ENCODE measurements at regions of chr19 and their contacts with region 1.

Region 1: GRCh38 chr19:5967994-5968430 is 9.9 kb downstream of the RANBP3 start:
- DNase-seq: peak in 8 of 9 donors; percentile 37 to 63 (median 56)
- ATAC-seq: peak; percentile 82
- H3K4me3 ChIP-seq: no peak overlapping the region
- H3K4me3 Mint-ChIP-seq: peak overlapping the region; percentile 33 to 84 (median 64)
- H3K27ac ChIP-seq: peak overlapping the region; percentile 53
- H3K27ac Mint-ChIP-seq: peak overlapping the region; percentile 3 to 92 (median 84)
- H3K4me1 ChIP-seq: peaks cover 37 to 66% of the 10 kb centered on the region in 2 donors
- H3K4me1 Mint-ChIP-seq: peaks cover 56 to 97% (median 90%) of the 10 kb centered on the region in 7 donors
- H3K27me3 ChIP-seq: no peaks in the 10 kb centered on the region
- H3K27me3 Mint-ChIP-seq: no peaks in the 10 kb centered on the region

Region 2: DNA sequence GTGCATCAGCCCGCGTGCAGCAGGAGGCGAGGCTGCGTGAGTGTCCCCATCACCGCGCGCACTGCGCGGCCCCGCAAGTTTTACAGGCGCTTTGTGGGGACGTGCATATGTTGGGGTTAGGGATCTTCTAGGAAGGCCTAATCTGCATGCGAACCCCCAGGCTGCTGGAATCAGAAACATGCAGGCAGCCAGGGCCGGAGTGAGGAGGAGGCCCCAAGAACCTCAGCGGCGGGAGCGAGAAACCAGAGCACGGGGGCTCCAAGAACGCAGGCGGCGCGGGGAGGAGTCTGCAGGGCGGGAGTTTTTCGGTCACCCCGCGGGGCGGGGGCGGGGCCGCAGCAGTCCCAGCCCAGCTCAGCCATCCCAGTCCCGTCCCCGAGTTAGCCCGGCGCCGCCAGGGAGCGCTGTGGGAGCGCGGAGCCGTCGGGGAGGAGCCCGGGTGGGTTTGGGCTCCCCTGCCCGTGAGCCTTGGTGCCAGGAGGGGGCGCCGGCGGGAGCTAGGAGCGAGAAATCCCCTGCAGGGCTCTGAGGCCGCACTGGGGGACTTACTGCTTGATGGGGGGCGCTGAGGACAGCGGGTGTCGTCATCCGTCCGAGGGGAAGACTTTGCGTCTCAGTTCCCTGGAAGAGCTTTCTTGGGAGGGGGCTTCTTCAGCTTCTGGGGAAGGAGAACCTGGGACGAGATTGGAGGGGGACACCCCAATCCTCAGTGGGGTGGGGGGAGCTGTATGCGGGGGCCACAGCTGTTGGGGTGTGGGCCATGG is 164.1 kb before region 1 on chr19:
- CTCF ChIA-PET with region 1: interaction called, 4 read pairs
- POLR2A ChIA-PET with region 1: interaction called, 7 read pairs
- intact Hi-C with region 1: loop called in 1 of 2 experiments (anchors 5 kb)
- DNase-seq: peak; percentile 89 to 99 (median 93)
- ATAC-seq: peak; percentile 98
- H3K4me3 ChIP-seq: peak overlapping the region; percentile 64
- H3K4me3 Mint-ChIP-seq: peak overlapping the region; percentile 62 to 87 (median 80)
- H3K27ac ChIP-seq: peak overlapping the region; percentile 44
- H3K27ac Mint-ChIP-seq: peak overlapping the region in 8 of 9 donors; percentile 28 to 83 (median 72)
- H3K4me1 ChIP-seq: peaks cover 13 to 20% of the 10 kb centered on the region in 2 donors
- H3K4me1 Mint-ChIP-seq: peaks cover 7 to 24% (median 21%) of the 10 kb centered on the region in 7 donors
- H3K27me3 ChIP-seq: peaks cover 0 to 2% of the 10 kb centered on the region in 2 donors
- H3K27me3 Mint-ChIP-seq: peaks cover 12 to 45% (median 18%) of the 10 kb centered on the region in 5 donors

Region 3: DNA sequence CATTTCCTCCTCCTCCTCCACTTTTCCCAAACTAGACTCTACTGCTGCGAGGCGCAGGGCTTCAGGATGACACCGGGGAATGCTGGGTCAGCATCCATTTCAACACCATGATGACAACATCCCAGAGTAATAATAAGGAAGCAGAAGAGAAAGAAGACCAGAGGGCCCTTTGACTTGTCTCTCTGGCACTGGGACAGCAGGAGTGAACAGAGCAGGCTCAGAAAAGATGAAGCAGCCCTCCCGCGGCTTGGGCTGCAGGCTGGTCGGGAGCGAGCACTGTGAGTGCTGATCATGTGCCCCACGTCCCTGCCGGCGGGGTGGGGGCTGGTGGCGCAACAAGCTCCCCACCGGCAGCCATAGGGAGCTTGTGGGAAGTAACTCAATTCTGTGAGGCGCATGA is 20.6 kb before region 1 on chr19:
- CTCF ChIA-PET with region 1: interaction called, 21 read pairs
- POLR2A ChIA-PET with region 1: interaction called, 89 read pairs
- intact Hi-C with region 1: loop called in 1 of 2 experiments (anchors 2 kb)
- DNase-seq: no peak
- ATAC-seq: peak; percentile 68
- H3K4me3 ChIP-seq: no peak overlapping the region
- H3K4me3 Mint-ChIP-seq: peak overlapping the region in 9 of 10 donors; percentile 16 to 82 (median 60)
- H3K27ac ChIP-seq: no peak overlapping the region
- H3K27ac Mint-ChIP-seq: peak overlapping the region in 7 of 9 donors; percentile 64 to 99 (median 89)
- H3K4me1 ChIP-seq: peaks cover 28 to 59% of the 10 kb centered on the region in 2 donors
- H3K4me1 Mint-ChIP-seq: peaks cover 57 to 88% (median 77%) of the 10 kb centered on the region in 7 donors
- H3K27me3 ChIP-seq: no peaks in the 10 kb centered on the region
- H3K27me3 Mint-ChIP-seq: no peaks in the 10 kb centered on the region

Region 4: GRCh38 chr19:5953680-5954213 is 14.3 kb before region 1 on chr19:
- CTCF ChIA-PET with region 1: interaction called, 21 read pairs
- POLR2A ChIA-PET with region 1: interaction called, 89 read pairs
- intact Hi-C with region 1: loop called in 1 of 2 experiments (anchors 2 kb)
- DNase-seq: peak in 8 of 9 donors; percentile 16 to 37 (median 32)
- ATAC-seq: peak; percentile 45
- H3K4me3 ChIP-seq: peak overlapping the region; percentile 17
- H3K4me3 Mint-ChIP-seq: peak overlapping the region; percentile 47 to 81 (median 74)
- H3K27ac ChIP-seq: peak overlapping the region; percentile 55
- H3K27ac Mint-ChIP-seq: peak overlapping the region; percentile 45 to 97 (median 89)
- H3K4me1 ChIP-seq: peaks cover 30 to 73% of the 10 kb centered on the region in 2 donors
- H3K4me1 Mint-ChIP-seq: peaks cover 67 to 99% (median 92%) of the 10 kb centered on the region in 7 donors
- H3K27me3 ChIP-seq: no peaks in the 10 kb centered on the region
- H3K27me3 Mint-ChIP-seq: no peaks in the 10 kb centered on the region

Region 5: DNA sequence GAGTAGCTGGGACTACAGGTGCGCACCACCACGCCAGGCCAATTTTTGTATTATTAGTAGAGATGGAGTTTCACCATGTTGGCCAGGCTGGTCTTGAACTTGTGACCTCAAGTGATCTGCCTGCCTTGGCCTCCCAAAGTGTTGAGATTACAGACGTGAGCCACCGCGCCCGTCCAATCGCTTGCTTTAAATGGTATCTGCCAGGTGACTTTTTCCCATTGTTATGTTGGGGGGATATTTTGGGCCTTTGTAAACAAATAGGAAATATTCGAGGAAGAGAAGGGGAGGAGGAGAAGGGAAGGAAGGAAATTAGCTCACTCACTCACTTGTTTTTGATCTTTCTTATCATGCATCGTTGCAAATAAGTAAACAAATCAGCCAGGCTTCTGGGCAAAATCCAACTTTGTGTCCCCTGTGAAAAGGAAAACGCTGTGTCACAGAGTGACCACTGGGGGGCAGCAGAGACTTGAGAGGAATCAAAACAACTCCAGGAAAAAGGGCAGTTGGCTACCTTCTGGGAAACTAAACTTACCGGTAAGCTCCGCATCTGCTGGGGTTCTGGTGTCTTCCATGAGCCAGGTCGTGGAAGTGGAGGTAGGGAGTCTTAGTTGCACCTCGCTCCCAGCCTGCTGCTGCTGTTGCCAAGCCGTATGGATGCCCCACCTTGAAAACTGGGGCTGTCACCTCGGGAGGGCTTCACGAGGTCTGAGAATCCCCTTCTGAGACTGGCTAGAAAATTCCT is 19.2 kb after region 1 on chr19:
- CTCF ChIA-PET with region 1: interaction called, 14 read pairs
- POLR2A ChIA-PET with region 1: interaction called, 3 read pairs
- intact Hi-C with region 1: loop called in 1 of 2 experiments (anchors 1 kb)
- DNase-seq: peak; percentile 52 to 71 (median 64)
- ATAC-seq: peak; percentile 85
- H3K4me3 ChIP-seq: peak overlapping the region; percentile 69
- H3K4me3 Mint-ChIP-seq: peak overlapping the region; percentile 61 to 82 (median 76)
- H3K27ac ChIP-seq: peak overlapping the region; percentile 32
- H3K27ac Mint-ChIP-seq: peak overlapping the region in 6 of 9 donors; percentile 1 to 66 (median 33)
- H3K4me1 ChIP-seq: peaks cover 0 to 5% of the 10 kb centered on the region in 2 donors
- H3K4me1 Mint-ChIP-seq: peaks cover 8 to 47% (median 18%) of the 10 kb centered on the region in 7 donors
- H3K27me3 ChIP-seq: no peaks in the 10 kb centered on the region
- H3K27me3 Mint-ChIP-seq: no peaks in the 10 kb centered on the region

Region 6: DNA sequence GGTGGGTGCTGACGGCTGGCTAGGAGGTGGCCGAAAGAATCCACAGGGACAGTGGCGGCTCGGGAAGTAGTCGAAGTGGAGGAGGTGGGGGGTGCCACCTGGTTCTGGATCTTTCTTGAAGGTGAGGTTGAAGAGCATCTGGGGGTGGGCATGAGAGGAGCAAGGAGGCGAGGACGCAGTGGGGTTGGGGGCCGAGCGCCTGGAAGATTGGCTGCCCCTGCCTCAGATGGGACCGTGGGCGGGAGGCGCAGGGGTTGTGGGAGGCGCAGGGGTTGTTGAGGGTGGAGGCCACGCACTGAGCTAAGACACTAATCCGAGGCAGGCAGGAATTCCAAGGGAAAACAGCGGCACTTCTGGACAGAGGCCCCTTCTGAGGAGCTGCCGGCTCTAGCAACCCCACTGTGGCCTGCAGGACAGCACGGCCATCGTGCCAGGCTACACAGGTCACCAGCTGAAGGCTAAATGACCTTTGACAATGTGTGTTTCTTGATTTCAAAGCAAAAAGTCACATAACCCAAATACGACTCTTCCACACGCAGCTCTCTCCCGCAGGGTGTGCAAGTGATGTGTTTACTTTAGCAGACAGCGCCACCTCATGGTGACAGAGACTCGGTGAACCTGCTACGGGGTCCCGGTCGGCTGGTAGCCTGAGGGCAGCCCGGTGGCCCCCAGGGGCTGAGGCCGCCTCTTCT is 54.0 kb after region 1 on chr19:
- CTCF ChIA-PET with region 1: interaction called, 31 read pairs
- POLR2A ChIA-PET with region 1: no interaction called
- intact Hi-C with region 1: loop called (anchors 1 to 5 kb)
- DNase-seq: peak; percentile 61 to 80 (median 75)
- ATAC-seq: peak; percentile 93
- H3K4me3 ChIP-seq: no peak overlapping the region
- H3K4me3 Mint-ChIP-seq: no peak overlapping the region
- H3K27ac ChIP-seq: no peak overlapping the region
- H3K27ac Mint-ChIP-seq: peak overlapping the region in 1 of 9 donors; percentile 62
- H3K4me1 ChIP-seq: no peaks in the 10 kb centered on the region
- H3K4me1 Mint-ChIP-seq: peaks cover 7 to 22% (median 15%) of the 10 kb centered on the region in 7 donors
- H3K27me3 ChIP-seq: no peaks in the 10 kb centered on the region
- H3K27me3 Mint-ChIP-seq: no peaks in the 10 kb centered on the region

Region 7: GRCh38 chr19:6765738-6766356 is 797.8 kb after region 1 on chr19:
- CTCF ChIA-PET with region 1: no interaction called
- POLR2A ChIA-PET with region 1: no interaction called
- intact Hi-C with region 1: no loop called
- DNase-seq: peak in 5 of 9 donors; percentile 23 to 41 (median 30)
- ATAC-seq: no peak
- H3K4me3 ChIP-seq: peak overlapping the region; percentile 82
- H3K4me3 Mint-ChIP-seq: peak overlapping the region; percentile 88 to 99 (median 94)
- H3K27ac ChIP-seq: peak overlapping the region; percentile 91
- H3K27ac Mint-ChIP-seq: peak overlapping the region; percentile 89 to 98 (median 95)
- H3K4me1 ChIP-seq: peaks cover 24 to 34% of the 10 kb centered on the region in 2 donors
- H3K4me1 Mint-ChIP-seq: peaks cover 19 to 53% (median 44%) of the 10 kb centered on the region in 7 donors
- H3K27me3 ChIP-seq: no peaks in the 10 kb centered on the region
- H3K27me3 Mint-ChIP-seq: no peaks in the 10 kb centered on the region